ENCODE measurements at regions of chr17 and their contacts with region 1.

Region 1: GRCh38 chr17:17496189-17497064 is at the start of gene RASD1:
- DNase-seq: peak; percentile 91
- ATAC-seq: peak; percentile 89
- H3K4me3 Mint-ChIP-seq: peak within 1 kb of the TSS; percentile 56
- H3K27ac Mint-ChIP-seq: no peak within 1 kb of the TSS
- H3K4me1 Mint-ChIP-seq: peaks cover 11% of the 10 kb centered on the region
- H3K27me3 Mint-ChIP-seq: peaks cover 5% of the 10 kb centered on the region
- total RNA-seq, gene RASD1: 0.18 to 0.21 TPM

Region 2: DNA sequence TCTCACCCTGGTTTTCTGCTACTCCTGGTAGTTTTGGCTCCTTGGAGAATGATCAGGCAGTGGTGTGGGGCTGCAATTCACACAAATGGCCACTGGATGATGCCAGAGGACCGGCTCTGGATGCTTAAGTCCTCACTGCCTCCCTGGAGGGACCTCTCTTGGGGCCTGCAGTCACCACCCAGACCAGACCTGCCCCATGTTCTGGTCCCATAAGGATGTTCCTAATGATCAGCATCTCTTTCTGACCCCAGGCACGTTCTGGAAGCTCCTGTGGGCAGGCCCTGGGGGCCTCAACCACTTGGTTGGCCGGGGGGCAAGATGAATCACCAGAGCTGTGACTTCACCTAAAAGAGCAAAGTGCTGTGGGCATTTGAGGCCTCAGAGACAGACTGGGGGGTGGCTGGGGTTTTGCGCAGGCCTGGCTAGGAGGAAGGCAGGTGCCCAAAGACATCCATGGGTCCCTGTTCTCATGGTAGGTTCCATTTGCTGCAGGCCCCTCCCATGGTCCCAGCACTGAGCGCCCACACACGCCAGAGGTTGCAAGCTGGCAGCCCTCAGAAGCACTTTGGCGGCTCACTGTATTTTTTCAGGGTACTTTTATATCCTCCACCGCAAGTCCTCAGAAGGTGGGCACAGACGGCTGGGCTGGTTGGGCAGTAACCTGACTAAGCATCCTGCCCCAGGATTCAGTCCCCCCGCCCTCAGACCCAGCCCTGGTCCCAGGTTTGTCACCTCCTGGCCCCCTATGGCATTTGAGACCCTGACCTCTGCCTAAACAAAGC is 140.1 kb before region 1 on chr17:
- CTCF ChIA-PET with region 1: interaction called, 31 read pairs
- POLR2A ChIA-PET with region 1: no interaction called
- intact Hi-C with region 1: loop called (anchors 1 kb)
- DNase-seq: peak; percentile 82
- ATAC-seq: peak; percentile 86
- H3K4me3 Mint-ChIP-seq: no peak overlapping the region
- H3K27ac Mint-ChIP-seq: no peak overlapping the region
- H3K4me1 Mint-ChIP-seq: no peaks in the 10 kb centered on the region
- H3K27me3 Mint-ChIP-seq: peaks cover 2% of the 10 kb centered on the region

Region 3: DNA sequence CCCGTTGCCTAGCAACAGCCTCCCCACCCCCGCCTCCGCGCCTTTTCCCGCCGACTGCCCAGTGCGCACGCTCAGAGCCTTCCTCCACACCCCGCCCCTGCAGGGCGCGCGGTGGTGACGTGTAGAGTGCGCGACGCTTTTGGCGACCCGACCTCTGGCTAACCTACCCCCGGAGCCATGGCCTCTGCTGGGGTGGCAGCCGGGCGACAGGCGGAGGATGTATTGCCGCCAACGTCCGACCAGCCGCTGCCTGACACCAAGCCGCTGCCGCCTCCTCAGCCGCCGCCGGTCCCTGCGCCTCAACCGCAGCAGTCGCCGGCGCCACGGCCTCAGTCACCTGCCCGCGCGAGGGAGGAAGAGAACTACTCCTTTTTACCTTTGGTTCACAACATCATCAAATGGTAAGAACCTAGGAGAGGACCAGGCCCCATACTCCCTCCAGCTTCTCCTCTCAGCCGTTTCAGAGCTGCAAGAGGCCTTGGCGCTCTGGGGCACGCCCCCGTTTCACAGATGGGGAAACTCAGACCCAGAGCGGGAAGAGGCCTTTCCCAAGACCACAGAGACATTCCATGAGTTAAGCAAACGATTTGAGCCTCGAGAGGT is 19.5 kb before region 1 on chr17 and contains the start of gene MED9:
- CTCF ChIA-PET with region 1: interaction called, 10 read pairs
- POLR2A ChIA-PET with region 1: interaction called, 3 read pairs
- intact Hi-C with region 1: loop called in 1 of 2 experiments (anchors 1 kb)
- DNase-seq: peak; percentile 97
- ATAC-seq: peak; percentile 94
- H3K4me3 Mint-ChIP-seq: peak within 1 kb of the TSS; percentile 94
- H3K27ac Mint-ChIP-seq: peak within 1 kb of the TSS; percentile 84
- H3K4me1 Mint-ChIP-seq: peaks cover 44% of the 10 kb centered on the region
- H3K27me3 Mint-ChIP-seq: no peaks in the 10 kb centered on the region
- total RNA-seq, gene MED9: 12.2 to 14.3 TPM

Region 4: GRCh38 chr17:17506811-17507464 is 10.5 kb after region 1 on chr17:
- CTCF ChIA-PET with region 1: interaction called, 14 read pairs
- POLR2A ChIA-PET with region 1: no interaction called
- intact Hi-C with region 1: no loop called
- DNase-seq: no peak
- ATAC-seq: no peak
- H3K4me3 Mint-ChIP-seq: no peak overlapping the region
- H3K27ac Mint-ChIP-seq: no peak overlapping the region
- H3K4me1 Mint-ChIP-seq: peaks cover 2% of the 10 kb centered on the region
- H3K27me3 Mint-ChIP-seq: peaks cover 4% of the 10 kb centered on the region

Region 5: DNA sequence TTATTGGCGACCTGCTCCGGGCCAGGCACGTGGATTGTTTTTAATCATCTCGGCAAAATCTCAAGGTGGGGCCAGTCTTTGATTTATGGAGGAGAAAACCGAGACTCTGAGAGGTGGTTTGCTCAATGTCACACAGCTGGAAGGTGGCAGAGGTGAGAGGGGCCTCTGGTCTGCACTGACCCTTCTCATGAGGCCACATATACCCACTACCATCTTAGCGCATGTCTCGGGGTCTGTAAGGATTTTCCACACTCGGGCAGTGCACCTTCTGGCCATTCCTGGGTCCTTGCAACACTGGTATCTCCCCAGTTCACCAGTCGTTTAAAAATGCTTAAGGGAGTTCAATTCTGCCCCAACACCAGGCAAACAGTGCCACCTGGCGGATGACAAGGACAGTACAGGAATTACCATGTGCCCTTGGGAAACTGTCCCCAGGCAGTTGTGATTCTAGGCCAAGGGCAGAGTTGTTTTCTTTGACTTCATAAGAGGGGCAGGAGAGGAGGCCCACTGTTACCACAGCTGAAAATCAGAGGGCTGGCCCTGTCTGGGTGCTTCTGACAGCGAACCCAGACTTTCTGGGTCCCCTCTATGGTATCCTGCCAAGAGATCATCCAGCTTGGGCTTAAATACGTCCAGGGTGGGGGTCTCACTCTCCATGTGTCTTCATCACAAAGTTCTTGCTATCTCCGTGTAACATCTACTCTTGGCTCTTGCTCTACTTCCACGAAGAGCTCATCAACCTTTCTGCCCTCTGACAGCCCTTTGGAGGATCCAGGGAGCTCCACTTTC is 145.4 kb after region 1 on chr17:
- CTCF ChIA-PET with region 1: interaction called, 39 read pairs
- POLR2A ChIA-PET with region 1: no interaction called
- intact Hi-C with region 1: loop called (anchors 1 kb)
- DNase-seq: peak; percentile 90
- ATAC-seq: peak; percentile 96
- H3K4me3 Mint-ChIP-seq: no peak overlapping the region
- H3K27ac Mint-ChIP-seq: no peak overlapping the region
- H3K4me1 Mint-ChIP-seq: no peaks in the 10 kb centered on the region
- H3K27me3 Mint-ChIP-seq: no peaks in the 10 kb centered on the region

Measured in activated CD4-positive, alpha-beta T cell treated with anti-CD3 and anti-CD28 coated beads for 36 hours (primary cell).